MCF 10A (cell line): ENCODE measurements at regions of chr20 and their contacts with region 1.

Region 1: GRCh38 chr20:13009682-13010406 is 1.1 kb downstream of the SPTLC3 start:
- DNase-seq: peak; percentile 86
- H3K4me3 Mint-ChIP-seq: peak overlapping the region; percentile 81
- H3K27ac Mint-ChIP-seq: peak overlapping the region; percentile 92
- H3K4me1 Mint-ChIP-seq: peaks cover 55% of the 10 kb centered on the region
- H3K27me3 Mint-ChIP-seq: no peaks in the 10 kb centered on the region
- CTCF ChIP-seq: no peak

Region 2: GRCh38 chr20:12977328-12978125 is 32.3 kb before region 1 on chr20:
- CTCF ChIA-PET with region 1: interaction called, 25 read pairs
- POLR2A ChIA-PET with region 1: interaction called, 44 read pairs
- intact Hi-C with region 1: no loop called
- DNase-seq: peak; percentile 8
- H3K4me3 Mint-ChIP-seq: no peak overlapping the region
- H3K27ac Mint-ChIP-seq: peak overlapping the region; percentile 6
- H3K4me1 Mint-ChIP-seq: peaks cover 8% of the 10 kb centered on the region
- H3K27me3 Mint-ChIP-seq: no peaks in the 10 kb centered on the region
- CTCF ChIP-seq: no peak

Region 3: DNA sequence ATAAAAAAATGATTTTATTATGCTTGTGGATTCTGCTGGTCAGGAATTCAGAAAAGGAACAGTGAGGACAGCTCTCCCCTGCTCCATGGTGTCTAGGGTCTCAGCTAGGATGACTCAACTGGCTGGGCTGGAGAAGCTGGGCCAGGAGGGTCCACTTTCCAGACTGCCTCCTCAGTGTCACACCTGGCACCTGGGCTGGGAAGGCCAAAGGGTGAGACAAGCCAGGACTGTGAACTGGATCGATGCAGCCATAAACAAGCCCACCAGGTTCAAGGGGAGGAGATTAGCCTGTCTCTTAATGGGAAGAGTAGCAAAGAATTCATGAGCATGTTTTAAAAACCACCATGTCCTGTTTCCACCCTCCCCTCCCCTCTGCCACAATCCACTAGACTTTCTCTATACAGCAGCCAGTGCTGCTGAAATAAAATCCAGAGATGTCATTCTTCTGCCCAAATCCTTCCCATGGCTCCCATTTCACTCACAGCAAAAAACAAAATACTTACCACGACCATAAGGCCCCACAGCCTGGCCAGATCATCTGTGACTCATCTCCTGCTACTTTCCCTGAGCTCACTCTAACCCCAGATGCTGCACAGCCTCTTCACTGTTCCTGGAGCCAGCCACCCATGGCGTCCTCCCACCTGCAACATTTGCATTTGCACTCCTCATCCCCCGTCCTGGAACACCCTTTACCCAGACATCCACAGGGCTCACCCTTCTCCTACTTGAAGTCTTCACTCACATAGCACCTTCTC is 12.7 kb after region 1 on chr20:
- CTCF ChIA-PET with region 1: interaction called, 48 read pairs
- POLR2A ChIA-PET with region 1: interaction called, 257 read pairs
- intact Hi-C with region 1: no loop called
- DNase-seq: peak; percentile 44
- H3K4me3 Mint-ChIP-seq: peak overlapping the region; percentile 36
- H3K27ac Mint-ChIP-seq: peak overlapping the region; percentile 30
- H3K4me1 Mint-ChIP-seq: peaks cover 46% of the 10 kb centered on the region
- H3K27me3 Mint-ChIP-seq: no peaks in the 10 kb centered on the region
- CTCF ChIP-seq: no peak

Region 4: GRCh38 chr20:13037727-13038126 is 27.9 kb after region 1 on chr20:
- CTCF ChIA-PET with region 1: interaction called, 6 read pairs
- POLR2A ChIA-PET with region 1: interaction called, 257 read pairs
- intact Hi-C with region 1: no loop called
- DNase-seq: no peak
- H3K4me3 Mint-ChIP-seq: no peak overlapping the region
- H3K27ac Mint-ChIP-seq: peak overlapping the region; percentile 10
- H3K4me1 Mint-ChIP-seq: peaks cover 58% of the 10 kb centered on the region
- H3K27me3 Mint-ChIP-seq: no peaks in the 10 kb centered on the region
- CTCF ChIP-seq: no peak

Region 5: GRCh38 chr20:13085275-13085674 is 75.4 kb after region 1 on chr20:
- CTCF ChIA-PET with region 1: interaction called, 16 read pairs
- POLR2A ChIA-PET with region 1: interaction called, 3 read pairs
- intact Hi-C with region 1: loop called (anchors 5 kb)
- DNase-seq: no peak
- H3K4me3 Mint-ChIP-seq: no peak overlapping the region
- H3K27ac Mint-ChIP-seq: no peak overlapping the region
- H3K4me1 Mint-ChIP-seq: no peaks in the 10 kb centered on the region
- H3K27me3 Mint-ChIP-seq: no peaks in the 10 kb centered on the region
- CTCF ChIP-seq: no peak